Activated CD4-positive, alpha-beta T cell treated with anti-CD3 and anti-CD28 coated beads, Interleukin-2, amount 10 ng/mL, durations not matched to agents 24 days and 14 days (primary cell): ENCODE measurements at regions of chr2 and their contacts with region 1.

Region 1: DNA sequence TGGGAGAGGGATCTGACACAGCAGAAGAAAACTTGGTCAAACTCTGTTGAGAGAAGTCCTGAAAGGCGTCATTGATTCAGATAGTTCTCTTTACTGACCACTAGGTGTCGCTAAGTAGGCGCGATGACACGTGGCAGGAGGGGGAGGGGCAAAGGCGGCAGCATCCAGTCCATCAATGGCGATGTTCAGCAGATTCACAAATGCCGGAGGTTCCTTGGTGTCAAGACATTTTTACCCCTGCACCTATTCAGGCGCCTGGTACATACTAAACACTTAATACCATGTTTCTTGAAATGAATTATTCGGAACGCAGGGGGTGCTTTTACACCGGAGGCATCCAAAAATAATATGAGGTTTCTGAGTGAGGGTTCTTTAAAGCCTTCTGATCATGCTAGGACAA is 3.0 kb upstream of the PLEK start:
- DNase-seq: peak; percentile 92
- H3K4me3 Mint-ChIP-seq: peak overlapping the region; percentile 30
- H3K27ac Mint-ChIP-seq: no peak overlapping the region
- H3K4me1 Mint-ChIP-seq: peaks cover 15% of the 10 kb centered on the region
- H3K27me3 Mint-ChIP-seq: peaks cover 20% of the 10 kb centered on the region

Region 2: DNA sequence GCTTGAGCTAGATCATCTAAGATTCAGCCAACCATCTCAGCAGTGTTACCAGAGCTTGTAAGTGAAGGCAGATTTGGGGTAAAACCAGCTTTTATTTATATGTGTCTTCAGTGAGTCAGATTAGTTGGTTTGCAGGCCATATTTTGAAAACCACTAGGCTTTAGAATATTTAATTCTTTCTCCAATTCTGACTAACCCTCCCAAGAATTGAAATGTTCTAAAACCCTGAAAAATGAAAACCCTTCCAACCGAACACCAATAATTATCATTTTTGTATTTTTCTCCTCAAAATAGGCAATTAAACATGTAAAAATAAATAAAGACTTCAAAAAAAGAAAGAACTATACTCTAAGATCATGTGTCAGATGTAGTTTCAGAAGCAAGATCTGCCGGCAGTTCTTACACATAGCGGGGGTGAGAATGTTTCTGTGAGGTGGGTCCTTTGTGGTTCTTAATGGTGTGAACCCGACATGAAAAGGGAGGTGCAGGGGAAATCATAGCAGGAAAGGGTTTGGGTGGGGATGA is 17.2 kb after region 1 on chr2:
- intact Hi-C with region 1: loop called (anchors 2 kb)
- DNase-seq: peak; percentile 63
- H3K4me3 Mint-ChIP-seq: peak overlapping the region; percentile 3
- H3K27ac Mint-ChIP-seq: peak overlapping the region; percentile 40
- H3K4me1 Mint-ChIP-seq: peaks cover 11% of the 10 kb centered on the region
- H3K27me3 Mint-ChIP-seq: peaks cover 38% of the 10 kb centered on the region

Region 3: GRCh38 chr2:68423966-68424650 is 62.0 kb after region 1 on chr2:
- intact Hi-C with region 1: loop called (anchors 5 kb)
- DNase-seq: peak; percentile 64
- H3K4me3 Mint-ChIP-seq: no peak overlapping the region
- H3K27ac Mint-ChIP-seq: no peak overlapping the region
- H3K4me1 Mint-ChIP-seq: peaks cover 3% of the 10 kb centered on the region
- H3K27me3 Mint-ChIP-seq: peaks cover 12% of the 10 kb centered on the region

Region 4: DNA sequence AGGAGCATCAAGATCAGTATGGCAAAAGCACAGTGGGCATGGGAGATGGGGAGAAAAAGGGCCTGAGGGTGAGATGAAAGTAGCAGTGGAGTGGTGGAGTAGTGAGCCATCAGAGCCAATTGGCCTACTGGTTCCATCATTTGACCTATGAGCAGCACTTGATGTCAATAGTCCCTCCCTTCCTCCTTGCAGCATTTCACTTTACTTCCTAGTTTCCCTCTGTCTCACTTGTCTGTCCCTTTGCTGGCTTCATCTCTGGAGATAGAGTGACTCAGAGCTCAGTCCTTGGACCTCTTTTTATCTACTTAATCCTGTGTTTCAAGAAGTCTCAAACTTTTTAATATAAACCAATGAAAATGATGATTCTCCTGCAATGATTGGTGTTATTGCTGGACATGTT is 72.9 kb after region 1 on chr2:
- intact Hi-C with region 1: no loop called
- DNase-seq: no peak
- H3K4me3 Mint-ChIP-seq: no peak overlapping the region
- H3K27ac Mint-ChIP-seq: no peak overlapping the region
- H3K4me1 Mint-ChIP-seq: peaks cover 8% of the 10 kb centered on the region
- H3K27me3 Mint-ChIP-seq: peaks cover 9% of the 10 kb centered on the region